Transverse colon (tissue), 4 donors: ENCODE measurements at regions of chr17 and their contacts with region 1.

Region 1: GRCh38 chr17:34199932-34200534 is 55.1 kb upstream of the CCL2 start:
- DNase-seq: peak; percentile 73
- H3K4me3 ChIP-seq: no peak overlapping the region
- H3K27ac ChIP-seq: no peak overlapping the region
- H3K4me1 ChIP-seq: no peaks in the 10 kb centered on the region
- H3K27me3 ChIP-seq: peaks cover 15% of the 10 kb centered on the region
- CTCF ChIP-seq: peak; percentile 99 to 100 (median 100)
- EP300 ChIP-seq: no peak
- POLR2A ChIP-seq: no peak

Region 2: GRCh38 chr17:34306466-34306865 is 106.4 kb after region 1 on chr17:
- in situ Hi-C with region 1: no loop called
- intact Hi-C with region 1: loop called (anchors 10 kb)
- DNase-seq: no peak
- H3K4me3 ChIP-seq: no peak overlapping the region
- H3K27ac ChIP-seq: peak overlapping the region in 1 of 4 donors; percentile 20
- H3K4me1 ChIP-seq: peaks cover 0 to 14% (median under 1%) of the 10 kb centered on the region in 4 donors
- H3K27me3 ChIP-seq: no peaks in the 10 kb centered on the region
- CTCF ChIP-seq: peak in 3 of 5 experiments; percentile 12 to 20 (median 19)
- EP300 ChIP-seq: no peak
- POLR2A ChIP-seq: no peak

Region 3: GRCh38 chr17:34361478-34362061 is 161.5 kb after region 1 on chr17:
- in situ Hi-C with region 1: loop called (anchors 5 kb)
- intact Hi-C with region 1: loop called (anchors 1 kb)
- DNase-seq: peak; percentile 90
- H3K4me3 ChIP-seq: no peak overlapping the region
- H3K27ac ChIP-seq: no peak overlapping the region
- H3K4me1 ChIP-seq: no peaks in the 10 kb centered on the region
- H3K27me3 ChIP-seq: no peaks in the 10 kb centered on the region
- CTCF ChIP-seq: peak; percentile 94 to 99 (median 96)
- EP300 ChIP-seq: no peak
- POLR2A ChIP-seq: no peak

Region 4: DNA sequence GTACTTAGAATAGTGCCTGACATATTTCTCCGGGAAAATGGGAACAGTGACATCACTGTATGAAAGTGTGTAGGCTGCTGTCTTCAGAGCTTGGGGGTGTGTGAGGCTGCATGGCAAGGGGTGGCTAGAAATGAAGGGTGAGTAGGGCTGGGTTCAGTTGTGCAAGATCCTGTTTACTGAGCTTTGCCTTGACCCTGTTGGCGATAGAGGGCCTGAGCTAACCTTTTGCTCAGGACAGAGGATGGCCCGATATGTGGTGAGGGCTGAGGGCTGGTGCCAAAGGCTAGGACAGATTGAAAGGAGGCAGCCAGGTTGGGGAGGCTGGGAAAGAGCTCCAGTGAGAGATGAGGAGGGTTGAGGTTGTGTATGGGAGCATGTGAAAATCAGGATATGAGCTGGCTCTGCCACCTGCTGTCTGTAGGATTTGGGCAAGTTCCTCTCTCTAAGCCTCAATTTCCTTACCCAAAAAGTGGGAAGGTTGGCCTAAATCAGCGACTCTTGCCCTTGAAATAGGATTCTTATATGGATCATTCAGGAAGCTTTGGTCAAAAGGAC is 169.0 kb after region 1 on chr17:
- in situ Hi-C with region 1: loop called (anchors 5 kb)
- intact Hi-C with region 1: no loop called
- DNase-seq: no peak
- H3K4me3 ChIP-seq: no peak overlapping the region
- H3K27ac ChIP-seq: no peak overlapping the region
- H3K4me1 ChIP-seq: peaks cover 0 to 4% (median 0%) of the 10 kb centered on the region in 4 donors
- H3K27me3 ChIP-seq: no peaks in the 10 kb centered on the region
- CTCF ChIP-seq: no peak
- EP300 ChIP-seq: no peak
- POLR2A ChIP-seq: no peak

Region 5: DNA sequence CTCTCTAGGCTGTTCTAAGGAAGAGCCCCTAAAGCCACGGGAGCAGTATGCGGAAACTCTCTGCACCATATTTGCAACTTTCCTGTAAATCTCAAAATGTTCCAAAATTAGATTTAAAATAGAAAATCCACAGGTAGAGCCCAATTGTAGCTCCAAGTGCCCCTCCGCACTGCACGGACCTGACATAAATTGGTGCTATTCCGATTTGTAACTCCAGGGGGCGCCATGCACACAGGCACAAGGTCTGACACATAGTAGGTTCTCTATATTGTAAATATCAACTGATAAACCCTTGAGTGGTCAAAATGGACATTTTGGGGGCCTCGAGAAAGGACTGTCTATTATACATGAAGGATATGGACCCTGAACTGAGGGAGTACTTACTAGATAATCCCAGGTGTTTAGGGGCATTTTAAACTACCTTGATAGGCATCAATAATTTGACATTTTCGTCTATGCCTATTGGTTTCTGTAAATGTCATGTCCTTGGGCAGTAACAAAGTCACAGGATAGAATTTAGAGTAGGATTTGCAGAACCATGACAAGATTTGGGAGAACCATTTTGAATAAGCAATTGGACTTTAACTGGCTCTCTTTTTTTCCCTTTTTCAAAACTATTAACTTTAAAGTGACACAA is 342.8 kb after region 1 on chr17:
- in situ Hi-C with region 1: loop called in 1 of 4 experiments (anchors 25 kb)
- intact Hi-C with region 1: no loop called
- DNase-seq: peak; percentile 25
- H3K4me3 ChIP-seq: no peak overlapping the region
- H3K27ac ChIP-seq: no peak overlapping the region
- H3K4me1 ChIP-seq: no peaks in the 10 kb centered on the region
- H3K27me3 ChIP-seq: peaks cover 24% of the 10 kb centered on the region
- CTCF ChIP-seq: peak; percentile 65 to 77 (median 75)
- EP300 ChIP-seq: no peak
- POLR2A ChIP-seq: no peak